OCI-LY7 (cell line): ENCODE measurements at regions of chr16 and their contacts with region 1.

Region 1: DNA sequence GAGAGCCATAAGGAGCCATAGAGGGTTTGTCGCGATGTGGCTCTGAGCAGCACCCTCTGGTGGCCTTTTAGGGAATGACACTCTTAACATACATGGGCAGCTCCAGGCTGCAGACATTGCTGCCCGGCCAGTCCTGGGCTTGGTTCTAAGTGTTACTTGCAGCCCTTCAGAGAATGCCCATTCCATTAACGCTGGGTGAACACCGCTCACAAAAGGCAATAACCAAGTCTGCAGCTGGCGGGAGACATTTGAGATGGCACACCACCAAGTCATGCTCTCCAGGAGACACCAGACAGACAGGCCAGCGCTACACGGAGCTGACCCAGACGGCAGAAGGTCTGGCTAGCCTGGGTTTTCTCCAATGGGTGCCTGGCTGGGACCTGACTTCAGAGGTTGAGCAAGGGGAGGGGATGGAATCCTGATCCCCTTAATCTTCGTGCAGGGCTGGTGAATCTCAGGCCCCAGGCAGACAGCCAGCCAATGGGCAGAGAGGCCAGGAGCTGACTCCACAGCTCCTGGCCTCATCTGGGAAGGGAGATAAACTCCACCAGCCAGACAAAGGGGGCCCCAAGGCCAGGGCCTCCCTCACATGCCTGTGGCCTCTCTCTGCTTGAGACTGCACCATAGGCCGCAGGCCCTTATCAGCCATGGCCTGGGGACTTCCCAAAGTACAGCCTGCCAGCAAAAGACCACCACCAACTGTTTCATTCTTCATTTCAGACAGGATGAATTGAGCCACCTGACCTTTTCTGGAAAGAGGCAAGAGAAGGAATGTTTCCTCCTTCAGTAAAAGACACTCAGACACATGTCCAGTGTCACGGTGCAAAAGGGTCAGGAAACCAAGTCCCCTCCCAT is 58.8 kb downstream of the ZDHHC7 start:
- DNase-seq: peak; percentile 80
- H3K4me3 ChIP-seq: no peak overlapping the region
- H3K27ac ChIP-seq: no peak overlapping the region
- H3K4me1 ChIP-seq: no peaks in the 10 kb centered on the region
- CTCF ChIP-seq: peak; percentile 89

Region 2: GRCh38 chr16:84754353-84754856 is 198.2 kb before region 1 on chr16:
- CTCF ChIA-PET with region 1: no interaction called
- POLR2A ChIA-PET with region 1: interaction called, 3 read pairs
- intact Hi-C with region 1: loop called (anchors 1 kb)
- DNase-seq: peak; percentile 87
- H3K4me3 ChIP-seq: no peak overlapping the region
- H3K27ac ChIP-seq: no peak overlapping the region
- H3K4me1 ChIP-seq: peaks cover 27% of the 10 kb centered on the region
- CTCF ChIP-seq: peak; percentile 95

Region 3: GRCh38 chr16:84874004-84874435 is 78.5 kb before region 1 on chr16:
- CTCF ChIA-PET with region 1: no interaction called
- POLR2A ChIA-PET with region 1: interaction called, 4 read pairs
- intact Hi-C with region 1: loop called (anchors 5 kb)
- DNase-seq: peak; percentile 55
- H3K4me3 ChIP-seq: peak overlapping the region; percentile 20
- H3K27ac ChIP-seq: peak overlapping the region; percentile 82
- H3K4me1 ChIP-seq: peaks cover 60% of the 10 kb centered on the region
- CTCF ChIP-seq: no peak

Region 4: GRCh38 chr16:84925092-84925772 is 27.3 kb before region 1 on chr16:
- CTCF ChIA-PET with region 1: interaction called, 4 read pairs
- POLR2A ChIA-PET with region 1: no interaction called
- intact Hi-C with region 1: loop called (anchors 1 kb)
- DNase-seq: peak; percentile 70
- H3K4me3 ChIP-seq: no peak overlapping the region
- H3K27ac ChIP-seq: no peak overlapping the region
- H3K4me1 ChIP-seq: no peaks in the 10 kb centered on the region
- CTCF ChIP-seq: peak; percentile 97